Psoas muscle (tissue), 8 donors: ENCODE measurements at regions of chr15 and their contacts with region 1.

Region 1: GRCh38 chr15:56886932-56887781 is 31.3 kb upstream of the TCF12 start:
- DNase-seq: peak; percentile 95 to 98
- ATAC-seq: peak; percentile 97 to 98 (median 98)
- H3K4me3 ChIP-seq: peak overlapping the region; percentile 84
- H3K27ac ChIP-seq: peak overlapping the region; percentile 98
- H3K4me1 ChIP-seq: peaks cover 18% of the 10 kb centered on the region
- H3K27me3 ChIP-seq: no peaks in the 10 kb centered on the region
- CTCF ChIP-seq: no peak

Region 2: DNA sequence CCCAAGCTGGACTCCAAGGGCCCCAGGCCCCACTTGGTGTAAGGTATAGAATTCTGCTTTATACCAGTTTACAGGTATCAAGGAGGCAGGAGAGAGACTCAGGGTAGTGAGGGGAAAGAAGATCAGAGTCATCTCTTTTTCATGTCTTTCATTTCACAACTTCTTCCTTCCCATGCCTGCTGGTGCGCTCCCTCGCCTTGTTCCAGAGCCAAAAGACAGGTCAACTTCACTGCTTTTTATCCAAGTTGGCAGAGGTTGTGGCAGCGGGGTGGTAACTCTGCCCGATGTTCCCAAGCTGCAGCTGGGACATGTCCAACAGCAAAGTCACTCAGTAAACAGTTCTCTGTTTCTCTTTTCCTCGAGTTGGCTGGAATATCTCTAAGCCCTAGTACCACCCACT is 55.0 kb before region 1 on chr15:
- intact Hi-C with region 1: loop called in 1 of 2 experiments (anchors 5 kb)
- DNase-seq: peak; percentile 61 to 86
- ATAC-seq: peak; percentile 92 to 98 (median 93)
- H3K4me3 ChIP-seq: peak overlapping the region; percentile 28
- H3K27ac ChIP-seq: peak overlapping the region; percentile 78
- H3K4me1 ChIP-seq: peaks cover 19% of the 10 kb centered on the region
- H3K27me3 ChIP-seq: no peaks in the 10 kb centered on the region
- CTCF ChIP-seq: no peak